ENCODE measurements at regions of chr2 and their contacts with region 1.

Region 1: DNA sequence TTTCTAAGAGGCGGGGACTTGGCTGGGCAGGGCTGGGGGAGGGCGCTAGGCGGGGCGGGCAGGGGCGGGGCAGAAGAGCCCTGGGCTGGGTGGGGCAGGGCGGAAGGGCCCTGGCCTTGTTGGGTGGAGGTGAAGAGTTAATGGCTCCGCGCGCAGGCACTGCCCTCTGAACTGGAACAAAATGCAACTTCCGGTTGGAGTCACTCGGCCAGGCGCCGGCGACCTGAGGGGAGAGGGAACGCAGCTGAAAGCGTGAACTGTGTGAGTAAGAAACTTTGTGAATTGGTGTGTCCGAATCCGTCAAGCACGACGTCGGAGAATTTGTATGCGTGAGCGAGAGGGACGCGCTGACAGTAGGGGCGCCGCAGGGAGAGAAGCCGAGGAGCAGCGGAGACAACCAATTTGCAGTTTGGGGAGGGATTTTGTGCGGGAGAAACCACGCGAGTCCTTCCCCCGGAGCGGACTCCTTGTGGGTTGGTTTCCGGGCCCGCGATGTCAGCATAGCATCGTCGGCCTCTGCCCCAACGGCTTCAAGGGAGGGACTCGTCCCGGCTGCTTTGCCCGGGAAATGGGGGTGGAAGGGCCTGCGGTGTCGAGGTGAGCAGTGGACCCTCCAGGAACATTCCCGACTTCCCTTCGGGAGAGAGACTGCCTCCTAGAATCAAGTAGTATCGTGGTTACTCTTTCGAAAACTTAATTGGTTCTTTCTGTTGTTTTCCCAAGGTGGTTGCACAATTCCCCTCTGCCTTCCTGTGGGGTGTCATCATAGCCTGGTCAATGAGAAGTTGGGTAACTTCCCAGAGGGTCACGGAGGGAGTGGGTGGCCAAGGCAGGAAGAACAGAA is at the start of gene TANK:
- DNase-seq: peak; percentile 95
- ATAC-seq: peak; percentile 95
- H3K4me3 Mint-ChIP-seq: peak within 1 kb of the TSS; percentile 91
- H3K27ac Mint-ChIP-seq: peak within 1 kb of the TSS; percentile 99
- H3K4me1 Mint-ChIP-seq: peaks cover 52% of the 10 kb centered on the region
- H3K27me3 Mint-ChIP-seq: no peaks in the 10 kb centered on the region
- total RNA-seq, gene TANK: 54.6 to 59.7 TPM

Region 2: DNA sequence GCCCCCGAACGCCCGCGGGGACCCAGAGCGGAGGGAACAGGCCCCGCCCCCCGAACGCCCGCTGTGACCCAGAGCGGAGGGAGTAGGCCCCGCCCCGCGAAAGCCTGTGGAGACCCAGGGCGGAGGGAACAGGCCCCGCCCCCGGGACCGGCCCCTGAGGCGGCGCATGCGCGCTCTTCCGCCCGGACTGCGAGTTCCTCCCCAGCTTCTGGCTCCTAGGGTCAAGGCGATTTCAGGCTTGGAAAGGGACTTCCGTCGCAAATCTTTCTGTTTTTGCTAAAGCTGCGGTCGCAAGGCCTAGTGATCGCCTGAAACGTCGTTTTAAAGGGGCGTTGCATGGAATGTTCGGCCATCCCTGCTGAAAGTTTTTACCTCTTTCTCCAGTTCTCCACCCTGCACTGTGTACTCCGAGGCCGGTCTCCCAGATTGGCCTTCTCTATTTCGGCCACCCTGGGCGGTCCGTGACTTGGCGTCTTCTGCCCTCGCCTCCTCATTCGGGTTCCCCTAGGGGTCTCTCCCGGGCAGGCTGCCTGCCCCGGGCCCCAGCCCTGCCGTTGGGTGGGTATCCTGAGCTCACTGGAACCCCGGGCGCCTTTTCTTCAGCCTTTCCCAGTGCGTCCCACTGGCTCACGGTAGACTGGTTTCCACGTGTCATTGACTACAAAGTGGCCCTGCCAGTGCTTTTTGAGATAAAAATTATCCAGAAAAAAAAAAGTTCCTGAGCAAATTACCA is 1873.6 kb before region 1 on chr2:
- CTCF ChIA-PET with region 1: no interaction called
- POLR2A ChIA-PET with region 1: no interaction called
- intact Hi-C with region 1: loop called in 1 of 2 experiments (anchors 10 kb)
- DNase-seq: peak; percentile 99
- ATAC-seq: peak; percentile 99
- H3K4me3 Mint-ChIP-seq: peak overlapping the region; percentile 84
- H3K27ac Mint-ChIP-seq: peak overlapping the region; percentile 83
- H3K4me1 Mint-ChIP-seq: peaks cover 29% of the 10 kb centered on the region
- H3K27me3 Mint-ChIP-seq: no peaks in the 10 kb centered on the region

Region 3: GRCh38 chr2:160332318-160332717 is 828.1 kb before region 1 on chr2:
- CTCF ChIA-PET with region 1: no interaction called
- POLR2A ChIA-PET with region 1: no interaction called
- intact Hi-C with region 1: loop called in 1 of 2 experiments (anchors 5 kb)
- DNase-seq: peak; percentile 32
- ATAC-seq: peak; percentile 28
- H3K4me3 Mint-ChIP-seq: no peak overlapping the region
- H3K27ac Mint-ChIP-seq: peak overlapping the region; percentile 83
- H3K4me1 Mint-ChIP-seq: peaks cover 88% of the 10 kb centered on the region
- H3K27me3 Mint-ChIP-seq: no peaks in the 10 kb centered on the region

Region 4: DNA sequence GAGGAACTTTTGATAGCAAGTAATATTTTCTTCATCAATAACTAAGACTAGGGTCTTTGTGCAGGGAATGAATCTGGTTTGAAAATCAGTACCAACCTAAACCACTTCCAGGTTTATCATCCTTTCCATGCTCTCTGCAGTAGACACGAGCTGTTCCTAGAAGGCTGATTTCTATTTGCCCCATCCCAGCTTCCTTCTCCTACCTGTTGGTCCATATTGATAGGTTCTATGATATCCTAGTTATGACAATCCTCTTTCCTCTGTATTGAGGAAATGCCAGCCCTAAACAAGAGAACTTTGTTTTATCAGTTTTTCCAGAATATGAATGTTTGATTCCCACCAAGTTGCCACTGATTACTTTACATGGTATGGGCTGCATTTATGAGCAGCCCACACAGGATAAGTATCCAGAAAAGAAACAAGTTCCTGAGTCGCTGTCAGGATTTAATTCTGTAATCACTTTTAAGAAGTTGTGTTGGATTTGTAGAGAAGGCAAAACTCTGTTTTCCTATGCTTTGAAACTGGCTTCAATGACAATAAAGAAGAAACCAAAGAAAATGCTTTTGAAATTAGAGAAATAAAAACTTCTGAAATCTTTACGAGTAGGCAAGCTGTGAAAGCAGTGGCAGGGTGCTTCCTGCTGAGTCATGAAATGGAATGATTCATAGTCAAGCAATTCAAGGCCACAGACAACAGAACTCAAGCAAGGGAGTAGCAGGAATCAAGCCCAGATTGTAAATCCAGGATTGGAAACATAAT is 37.5 kb before region 1 on chr2:
- CTCF ChIA-PET with region 1: interaction called, 3 read pairs
- POLR2A ChIA-PET with region 1: interaction called, 3 read pairs
- intact Hi-C with region 1: loop called in 1 of 2 experiments (anchors 5 kb)
- DNase-seq: peak; percentile 61
- ATAC-seq: peak; percentile 95
- H3K4me3 Mint-ChIP-seq: no peak overlapping the region
- H3K27ac Mint-ChIP-seq: no peak overlapping the region
- H3K4me1 Mint-ChIP-seq: peaks cover 24% of the 10 kb centered on the region
- H3K27me3 Mint-ChIP-seq: no peaks in the 10 kb centered on the region

Region 5: GRCh38 chr2:161243905-161244304 is 83.5 kb after region 1 on chr2:
- CTCF ChIA-PET with region 1: no interaction called
- POLR2A ChIA-PET with region 1: no interaction called
- intact Hi-C with region 1: loop called in 1 of 2 experiments (anchors 1 kb)
- DNase-seq: peak; percentile 53
- ATAC-seq: peak; percentile 20
- H3K4me3 Mint-ChIP-seq: peak overlapping the region; percentile 91
- H3K27ac Mint-ChIP-seq: peak overlapping the region; percentile 98
- H3K4me1 Mint-ChIP-seq: peaks cover 56% of the 10 kb centered on the region
- H3K27me3 Mint-ChIP-seq: no peaks in the 10 kb centered on the region

Region 6: GRCh38 chr2:161766334-161766733 is 605.9 kb after region 1 on chr2:
- CTCF ChIA-PET with region 1: no interaction called
- POLR2A ChIA-PET with region 1: no interaction called
- intact Hi-C with region 1: no loop called
- DNase-seq: no peak
- ATAC-seq: no peak
- H3K4me3 Mint-ChIP-seq: no peak overlapping the region
- H3K27ac Mint-ChIP-seq: no peak overlapping the region
- H3K4me1 Mint-ChIP-seq: no peaks in the 10 kb centered on the region
- H3K27me3 Mint-ChIP-seq: no peaks in the 10 kb centered on the region

Region 7: DNA sequence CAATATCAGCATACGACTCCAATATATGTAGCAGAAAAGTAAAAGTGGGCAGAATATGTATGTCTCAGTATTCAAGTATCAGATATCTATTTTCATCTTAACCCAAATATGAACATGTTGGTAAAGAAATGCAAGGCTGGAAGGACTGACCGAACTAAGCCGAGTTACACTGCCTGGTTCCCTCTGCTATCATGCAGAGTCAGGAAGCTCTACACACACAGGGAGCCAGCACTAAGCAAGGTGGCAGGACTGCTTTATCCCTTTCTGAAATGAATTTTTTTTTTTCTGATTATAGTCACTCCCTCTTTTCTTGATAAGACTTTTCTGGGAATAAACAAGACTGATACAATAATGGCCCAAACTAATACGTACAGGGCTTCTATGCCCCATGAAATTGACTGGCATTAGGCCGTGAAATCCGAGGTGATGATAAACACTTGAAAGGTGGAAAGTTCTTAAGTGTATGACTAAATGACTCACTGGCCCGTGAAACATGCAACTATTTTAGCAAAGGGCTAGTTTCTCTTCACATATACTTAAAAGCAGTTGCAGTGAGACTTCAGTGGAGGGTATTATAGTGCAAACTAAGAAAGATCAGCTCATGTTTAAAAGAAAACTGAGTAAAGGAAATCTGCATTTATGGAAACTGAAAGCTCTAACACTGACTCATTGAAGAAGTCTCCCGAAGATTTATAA is 898.7 kb after region 1 on chr2:
- CTCF ChIA-PET with region 1: no interaction called
- POLR2A ChIA-PET with region 1: no interaction called
- intact Hi-C with region 1: loop called (anchors 5 to 10 kb)
- DNase-seq: peak; percentile 54
- ATAC-seq: peak; percentile 78
- H3K4me3 Mint-ChIP-seq: peak overlapping the region; percentile 52
- H3K27ac Mint-ChIP-seq: peak overlapping the region; percentile 85
- H3K4me1 Mint-ChIP-seq: peaks cover 86% of the 10 kb centered on the region
- H3K27me3 Mint-ChIP-seq: no peaks in the 10 kb centered on the region

Measured in activated CD4-positive, alpha-beta T cell treated with anti-CD3 and anti-CD28 coated beads for 36 hours (primary cell).